Ascending aorta (tissue), 2 donors: ENCODE measurements at regions of chr19 and their contacts with region 1.

Region 1: DNA sequence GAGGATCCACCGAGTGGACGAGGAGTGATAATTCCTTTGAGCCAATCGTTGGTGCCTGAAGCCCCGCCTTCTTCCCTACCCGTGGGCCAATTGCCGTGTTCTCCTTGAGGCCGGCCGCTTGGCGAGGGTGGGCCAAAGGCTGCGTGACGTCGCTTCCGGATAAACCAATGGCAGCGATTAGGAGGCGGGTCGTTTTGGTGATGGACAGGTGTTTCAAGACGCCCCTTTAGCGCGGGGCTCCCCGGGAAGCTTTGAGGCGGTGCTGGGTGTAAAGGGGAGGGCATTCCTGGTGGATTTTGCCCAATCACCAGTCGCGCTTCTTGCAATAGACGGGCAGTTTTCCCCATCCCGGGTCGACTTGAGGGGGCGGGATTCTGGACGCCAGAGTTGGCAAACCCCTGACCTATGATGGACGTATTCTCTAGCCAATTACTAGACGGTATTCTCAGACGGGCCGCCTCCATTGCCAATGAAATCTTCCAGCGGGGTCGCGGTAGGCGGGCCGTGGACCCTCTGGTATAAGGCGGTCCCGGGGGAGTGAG is 310 bp upstream of the PRMT1 start:
- DNase-seq: peak; percentile 100
- H3K4me3 ChIP-seq: peak overlapping the region; percentile 95 to 97
- H3K27ac ChIP-seq: peak overlapping the region; percentile 93 to 94
- H3K4me1 ChIP-seq: peaks cover 0 to 27% of the 10 kb centered on the region in 2 donors
- H3K27me3 ChIP-seq: no peaks in the 10 kb centered on the region
- CTCF ChIP-seq: no peak

Region 2: GRCh38 chr19:49363268-49364082 is 313.3 kb before region 1 on chr19 and contains the start of gene DKKL1:
- intact Hi-C with region 1: loop called (anchors 5 kb)
- DNase-seq: peak; percentile 98 to 99
- H3K4me3 ChIP-seq: peak within 1 kb of the TSS; percentile 45 to 76
- H3K27ac ChIP-seq: peak within 1 kb of the TSS; percentile 88 to 89
- H3K4me1 ChIP-seq: peaks cover 0 to 7% of the 10 kb centered on the region in 2 donors
- H3K27me3 ChIP-seq: no peaks in the 10 kb centered on the region
- CTCF ChIP-seq: no peak
- total RNA-seq, gene DKKL1: not detected

Region 3: DNA sequence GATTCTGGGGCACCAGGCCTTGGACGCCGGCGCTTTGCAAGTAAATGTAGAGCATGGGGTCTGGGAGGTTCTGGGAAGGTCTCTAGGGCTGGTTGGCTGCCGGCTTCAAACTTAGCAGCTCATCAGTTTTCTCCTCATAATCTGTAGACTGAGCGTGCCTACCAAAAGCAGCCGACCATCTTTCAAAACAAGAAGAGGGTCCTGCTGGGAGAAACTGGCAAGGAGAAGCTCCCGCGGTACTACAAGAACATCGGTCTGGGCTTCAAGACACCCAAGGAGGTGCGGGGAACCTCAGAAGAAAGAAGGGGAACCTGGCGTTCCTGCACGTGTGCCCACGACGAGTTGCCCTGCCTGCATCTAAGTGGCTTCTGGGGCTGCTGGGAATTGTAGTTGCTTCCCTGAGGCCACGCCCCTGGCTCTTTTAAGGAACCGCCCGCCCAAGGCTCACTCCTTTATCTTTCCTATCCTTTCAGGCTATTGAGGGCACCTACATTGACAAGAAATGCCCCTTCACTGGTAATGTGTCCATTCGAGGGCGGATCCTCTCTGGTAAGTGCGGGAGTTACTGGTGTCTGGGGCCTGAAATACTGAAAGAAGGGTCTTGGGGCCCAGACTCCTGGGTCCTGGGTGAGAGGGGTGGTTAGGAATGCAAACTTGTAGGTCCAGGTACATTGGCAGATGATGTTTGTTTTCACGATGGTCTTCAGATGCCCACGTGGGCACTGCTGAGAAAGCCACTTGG is 179.5 kb before region 1 on chr19:
- intact Hi-C with region 1: loop called (anchors 5 kb)
- DNase-seq: peak in 1 of 2 donors; percentile 86
- H3K4me3 ChIP-seq: peak overlapping the region; percentile 77 to 81
- H3K27ac ChIP-seq: peak overlapping the region; percentile 93 to 95
- H3K4me1 ChIP-seq: peaks cover 13 to 20% of the 10 kb centered on the region in 2 donors
- H3K27me3 ChIP-seq: no peaks in the 10 kb centered on the region
- CTCF ChIP-seq: no peak

Region 4: GRCh38 chr19:49640113-49640898 is 36.5 kb before region 1 on chr19 and contains the start of gene RRAS:
- intact Hi-C with region 1: loop called (anchors 1 kb)
- DNase-seq: peak; percentile 99 to 100
- H3K4me3 ChIP-seq: peak within 1 kb of the TSS; percentile 80 to 87
- H3K27ac ChIP-seq: peak within 1 kb of the TSS; percentile 99 to 100
- H3K4me1 ChIP-seq: peaks cover 20 to 24% of the 10 kb centered on the region in 2 donors
- H3K27me3 ChIP-seq: no peaks in the 10 kb centered on the region
- CTCF ChIP-seq: no peak
- total RNA-seq, gene RRAS: 161 TPM

Region 5: GRCh38 chr19:49766007-49766937 is 89.5 kb after region 1 on chr19:
- intact Hi-C with region 1: loop called (anchors 1 kb)
- DNase-seq: peak; percentile 99 to 100
- H3K4me3 ChIP-seq: peak overlapping the region; percentile 73 to 82
- H3K27ac ChIP-seq: peak overlapping the region; percentile 80 to 87
- H3K4me1 ChIP-seq: peaks cover 10 to 16% of the 10 kb centered on the region in 2 donors
- H3K27me3 ChIP-seq: no peaks in the 10 kb centered on the region
- CTCF ChIP-seq: no peak

Region 6: GRCh38 chr19:49850473-49851342 is 173.9 kb after region 1 on chr19 and contains the start of gene PTOV1:
- intact Hi-C with region 1: loop called (anchors 2 kb)
- DNase-seq: peak; percentile 51 to 96
- H3K4me3 ChIP-seq: peak within 1 kb of the TSS; percentile 85 to 90
- H3K27ac ChIP-seq: peak within 1 kb of the TSS; percentile 99 to 100
- H3K4me1 ChIP-seq: peaks cover 4 to 10% of the 10 kb centered on the region in 2 donors
- H3K27me3 ChIP-seq: no peaks in the 10 kb centered on the region
- CTCF ChIP-seq: peak in 1 of 3 experiments; percentile 4
- total RNA-seq, gene PTOV1: 163 TPM